ENCODE measurements at regions of chr18 and their contacts with region 1.

Region 1: DNA sequence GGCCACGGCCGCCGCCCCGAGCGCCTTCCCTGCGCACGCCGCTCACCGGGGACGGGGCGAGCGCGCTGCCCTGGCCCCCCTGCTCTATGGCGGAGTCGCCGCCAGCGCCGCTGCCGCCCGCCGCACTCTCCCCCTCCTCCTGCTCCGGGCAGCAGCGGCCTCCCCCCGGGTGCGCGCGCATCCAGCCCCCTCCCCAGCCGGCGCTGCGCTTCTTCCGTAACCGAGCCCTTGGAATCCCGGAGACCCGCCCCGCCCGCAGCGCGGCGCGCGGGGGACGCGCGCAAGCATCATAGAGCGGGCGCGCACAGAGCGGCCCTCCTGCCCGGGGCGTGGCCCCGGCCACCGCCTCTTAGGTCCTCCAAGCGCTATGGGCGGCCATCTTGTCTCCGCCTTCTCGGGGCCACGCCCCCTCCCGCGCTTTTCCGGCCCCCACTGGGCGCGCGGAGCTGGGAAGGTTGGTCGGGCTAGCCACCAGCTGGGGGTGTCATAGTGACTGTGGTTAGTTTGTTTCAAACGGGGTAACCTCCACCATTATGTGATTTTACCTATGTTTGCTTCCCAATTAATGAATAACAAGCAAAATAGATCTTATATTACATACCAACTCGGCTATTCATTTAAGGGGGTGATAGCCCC is at the start of gene MBD2:
- DNase-seq: peak; percentile 94
- H3K4me3 Mint-ChIP-seq: peak within 1 kb of the TSS; percentile 98
- H3K27ac Mint-ChIP-seq: peak within 1 kb of the TSS; percentile 98
- H3K4me1 Mint-ChIP-seq: peaks cover 43% of the 10 kb centered on the region
- H3K27me3 Mint-ChIP-seq: no peaks in the 10 kb centered on the region
- total RNA-seq, gene MBD2: 223 and 242 TPM in 2 replicates

Region 2: GRCh38 chr18:54181856-54182602 is 42.5 kb before region 1 on chr18:
- intact Hi-C with region 1: loop called (anchors 1 kb)
- DNase-seq: no peak
- H3K4me3 Mint-ChIP-seq: no peak overlapping the region
- H3K27ac Mint-ChIP-seq: no peak overlapping the region
- H3K4me1 Mint-ChIP-seq: peaks cover 22% of the 10 kb centered on the region
- H3K27me3 Mint-ChIP-seq: no peaks in the 10 kb centered on the region

Region 3: GRCh38 chr18:54261894-54262293 is 37.4 kb after region 1 on chr18:
- intact Hi-C with region 1: loop called (anchors 1 kb)
- DNase-seq: no peak
- H3K4me3 Mint-ChIP-seq: peak overlapping the region; percentile 77
- H3K27ac Mint-ChIP-seq: peak overlapping the region; percentile 94
- H3K4me1 Mint-ChIP-seq: peaks cover 66% of the 10 kb centered on the region
- H3K27me3 Mint-ChIP-seq: no peaks in the 10 kb centered on the region

Region 4: DNA sequence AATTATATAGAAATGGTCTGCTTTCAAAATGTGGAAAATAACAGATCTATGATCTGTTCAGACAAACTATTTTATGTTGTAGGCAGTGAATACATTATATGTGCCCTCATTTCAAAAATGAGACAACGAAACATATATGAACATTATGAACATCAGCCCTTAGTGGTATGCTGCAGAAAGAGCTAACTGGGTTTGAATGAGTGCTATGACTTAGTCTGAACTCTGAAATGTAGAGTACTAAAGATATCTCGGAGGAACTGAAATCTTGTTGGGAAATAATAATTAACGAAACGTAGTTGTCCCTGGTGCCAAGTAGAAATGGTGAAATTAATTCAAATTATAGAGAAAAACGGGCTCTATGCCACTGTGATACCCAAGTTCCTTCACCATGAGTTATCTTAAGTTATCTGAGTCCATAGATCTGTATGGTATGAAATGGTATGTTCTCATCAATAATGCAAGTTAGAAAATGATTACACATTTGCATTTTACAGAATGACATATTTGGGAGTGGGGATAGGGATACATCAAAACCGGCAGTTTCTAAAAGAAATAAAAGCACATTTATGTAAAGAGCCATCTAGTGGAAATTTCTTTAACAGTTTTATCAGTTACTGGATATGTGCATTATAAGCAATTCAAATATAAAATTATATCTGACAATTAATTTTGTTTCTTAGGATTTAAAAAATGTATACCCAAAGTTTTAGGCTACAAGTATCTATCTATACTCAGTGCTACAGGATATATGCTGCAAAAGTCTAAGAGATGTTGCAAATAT is 106.5 kb after region 1 on chr18:
- intact Hi-C with region 1: loop called (anchors 1 kb)
- DNase-seq: no peak
- H3K4me3 Mint-ChIP-seq: no peak overlapping the region
- H3K27ac Mint-ChIP-seq: no peak overlapping the region
- H3K4me1 Mint-ChIP-seq: no peaks in the 10 kb centered on the region
- H3K27me3 Mint-ChIP-seq: peaks cover 6% of the 10 kb centered on the region

Region 5: DNA sequence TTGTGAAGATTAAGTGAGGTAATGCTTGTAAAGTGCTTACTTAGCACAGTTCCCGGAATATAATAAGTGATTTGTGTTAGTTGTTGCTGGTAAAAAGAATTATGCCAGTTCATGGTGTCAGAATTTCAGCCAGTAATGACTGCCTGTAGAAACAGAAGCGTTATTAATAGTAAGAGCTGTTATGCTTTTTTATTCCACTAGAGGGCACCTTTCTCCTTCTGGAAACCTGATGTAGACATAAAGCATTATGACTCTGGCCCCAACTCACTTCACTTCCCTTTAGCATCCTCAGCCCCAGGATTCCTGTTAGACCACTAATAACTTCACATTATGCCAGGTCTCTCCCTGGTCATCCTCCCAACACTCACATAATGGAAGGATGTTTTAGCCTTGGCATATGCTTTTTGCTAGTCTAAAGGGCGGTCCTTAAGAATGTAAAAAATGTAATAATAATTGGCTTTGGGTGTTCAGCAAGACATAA is 168.1 kb after region 1 on chr18:
- intact Hi-C with region 1: loop called (anchors 1 kb)
- DNase-seq: no peak
- H3K4me3 Mint-ChIP-seq: no peak overlapping the region
- H3K27ac Mint-ChIP-seq: no peak overlapping the region
- H3K4me1 Mint-ChIP-seq: peaks cover 43% of the 10 kb centered on the region
- H3K27me3 Mint-ChIP-seq: peaks cover 3% of the 10 kb centered on the region